Heart left ventricle (tissue), 16 donors: ENCODE measurements at regions of chr7 and their contacts with region 1.

Region 1: GRCh38 chr7:140646931-140647647 is 6.5 kb upstream of the DENND2A start:
- DNase-seq: peak in 1 of 5 donors; percentile 32
- ATAC-seq: peak; percentile 60 to 71 (median 69)
- H3K4me3 ChIP-seq: no peak overlapping the region
- H3K27ac ChIP-seq: no peak overlapping the region
- H3K4me1 ChIP-seq: peaks cover 0 to 18% (median under 1%) of the 10 kb centered on the region in 12 donors
- H3K27me3 ChIP-seq: no peaks in the 10 kb centered on the region
- CTCF ChIP-seq: peak; percentile 18 to 63 (median 42)
- POLR2A ChIP-seq: no peak

Region 2: GRCh38 chr7:140096459-140096858 is 550.6 kb before region 1 on chr7:
- intact Hi-C with region 1: no loop called
- DNase-seq: no peak
- ATAC-seq: no peak
- H3K4me3 ChIP-seq: no peak overlapping the region
- H3K27ac ChIP-seq: no peak overlapping the region
- H3K4me1 ChIP-seq: no peaks in the 10 kb centered on the region
- H3K27me3 ChIP-seq: no peaks in the 10 kb centered on the region
- CTCF ChIP-seq: no peak
- POLR2A ChIP-seq: no peak

Region 3: GRCh38 chr7:140479062-140479738 is 167.9 kb before region 1 on chr7 and contains the start of gene MKRN1:
- intact Hi-C with region 1: loop called in 6 of 10 experiments (anchors 2 to 10 kb)
- DNase-seq: peak; percentile 93 to 97 (median 96)
- ATAC-seq: peak; percentile 98 to 99 (median 99)
- H3K4me3 ChIP-seq: peak within 1 kb of the TSS; percentile 68 to 100 (median 94)
- H3K27ac ChIP-seq: peak within 1 kb of the TSS; percentile 73 to 91 (median 84)
- H3K4me1 ChIP-seq: peaks cover 0 to 33% (median 22%) of the 10 kb centered on the region in 12 donors
- H3K27me3 ChIP-seq: no peaks in the 10 kb centered on the region
- CTCF ChIP-seq: no peak
- POLR2A ChIP-seq: peak in 1 of 2 donors; percentile 84
- total RNA-seq, gene MKRN1: 52.3 to 109 (median 100) TPM

Region 4: DNA sequence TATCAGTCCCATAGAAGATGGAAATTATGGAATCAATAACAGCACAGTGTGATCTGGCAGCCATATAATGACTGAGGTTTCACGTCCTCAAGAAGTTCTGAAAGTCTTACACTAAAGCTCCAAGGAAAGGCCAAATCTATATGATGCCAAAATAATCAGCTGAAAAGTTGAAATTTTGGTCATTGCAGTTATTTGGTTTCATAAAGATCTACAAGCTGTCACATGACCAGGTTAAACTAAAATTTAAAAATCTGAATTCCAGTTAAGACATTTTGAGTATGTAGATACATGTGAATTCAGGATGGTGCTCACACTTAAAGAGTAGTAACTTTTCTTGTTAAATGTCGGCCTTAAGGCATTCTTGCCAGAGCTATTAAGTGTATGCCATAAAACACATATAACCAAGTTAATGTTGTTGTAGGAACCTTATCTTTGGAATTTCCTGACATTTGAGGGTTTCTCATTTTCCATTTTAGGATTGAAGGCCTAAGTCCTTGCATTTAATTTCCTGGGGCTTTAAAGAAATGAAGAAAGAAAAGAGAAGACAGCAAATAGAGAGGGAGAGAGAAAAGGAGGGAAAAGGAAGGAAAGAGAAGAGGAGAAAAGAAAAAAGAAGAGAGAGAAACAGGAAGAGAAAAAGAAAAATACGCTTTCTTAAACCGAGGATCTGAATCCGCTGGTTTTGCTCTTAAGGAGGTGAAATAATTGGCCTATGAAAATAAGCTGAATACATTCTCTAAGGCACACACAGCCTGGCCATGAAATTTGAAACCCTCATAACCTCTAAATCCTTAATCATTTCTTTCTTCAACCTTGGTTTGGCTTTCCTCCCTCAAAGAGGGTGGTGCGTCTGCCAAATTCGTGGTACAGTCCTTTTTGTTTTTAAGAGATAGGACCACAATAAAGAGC is 50.3 kb before region 1 on chr7:
- intact Hi-C with region 1: loop called in 1 of 10 experiments (anchors 10 kb)
- DNase-seq: no peak
- ATAC-seq: no peak
- H3K4me3 ChIP-seq: no peak overlapping the region
- H3K27ac ChIP-seq: peak overlapping the region in 11 of 12 donors; percentile 9 to 63 (median 49)
- H3K4me1 ChIP-seq: peaks cover 0 to 36% (median 8%) of the 10 kb centered on the region in 12 donors
- H3K27me3 ChIP-seq: no peaks in the 10 kb centered on the region
- CTCF ChIP-seq: no peak
- POLR2A ChIP-seq: no peak